ENCODE measurements at regions of chr5 and their contacts with region 1.

Region 1: GRCh38 chr5:95803284-95804148 is 19.0 kb downstream of the GLRX start:
- DNase-seq: peak; percentile 84
- ATAC-seq: peak; percentile 97
- H3K4me3 ChIP-seq: peak overlapping the region in 1 of 3 experiments; percentile 39; a peak in 2 of 6 replicates
- H3K27ac ChIP-seq: peak overlapping the region; percentile 76
- H3K4me1 ChIP-seq: peaks cover 72% of the 10 kb centered on the region
- H3K27me3 ChIP-seq: no peaks in the 10 kb centered on the region
- CTCF ChIP-seq: no peak
- EP300 ChIP-seq: peak in 1 of 2 experiments; percentile 24; a peak in 1 of 4 replicates
- POLR2A ChIP-seq: no peak
- RAD21 ChIP-seq: no peak

Region 2: GRCh38 chr5:95835682-95836385 is 32.3 kb after region 1 on chr5:
- CTCF ChIA-PET with region 1: no interaction called
- POLR2A ChIA-PET with region 1: interaction called, 10 read pairs
- in situ Hi-C with region 1: no loop called
- intact Hi-C with region 1: loop called (anchors 5 kb)
- DNase-seq: no peak
- ATAC-seq: no peak
- H3K4me3 ChIP-seq: peak overlapping the region in 1 of 3 experiments; percentile 69; a peak in 1 of 6 replicates
- H3K27ac ChIP-seq: no peak overlapping the region
- H3K4me1 ChIP-seq: peaks cover 66% of the 10 kb centered on the region
- H3K27me3 ChIP-seq: no peaks in the 10 kb centered on the region
- CTCF ChIP-seq: no peak
- EP300 ChIP-seq: no peak
- POLR2A ChIP-seq: no peak
- RAD21 ChIP-seq: no peak